RWPE1 (cell line): ENCODE measurements at regions of chr20 and their contacts with region 1.

Region 1: DNA sequence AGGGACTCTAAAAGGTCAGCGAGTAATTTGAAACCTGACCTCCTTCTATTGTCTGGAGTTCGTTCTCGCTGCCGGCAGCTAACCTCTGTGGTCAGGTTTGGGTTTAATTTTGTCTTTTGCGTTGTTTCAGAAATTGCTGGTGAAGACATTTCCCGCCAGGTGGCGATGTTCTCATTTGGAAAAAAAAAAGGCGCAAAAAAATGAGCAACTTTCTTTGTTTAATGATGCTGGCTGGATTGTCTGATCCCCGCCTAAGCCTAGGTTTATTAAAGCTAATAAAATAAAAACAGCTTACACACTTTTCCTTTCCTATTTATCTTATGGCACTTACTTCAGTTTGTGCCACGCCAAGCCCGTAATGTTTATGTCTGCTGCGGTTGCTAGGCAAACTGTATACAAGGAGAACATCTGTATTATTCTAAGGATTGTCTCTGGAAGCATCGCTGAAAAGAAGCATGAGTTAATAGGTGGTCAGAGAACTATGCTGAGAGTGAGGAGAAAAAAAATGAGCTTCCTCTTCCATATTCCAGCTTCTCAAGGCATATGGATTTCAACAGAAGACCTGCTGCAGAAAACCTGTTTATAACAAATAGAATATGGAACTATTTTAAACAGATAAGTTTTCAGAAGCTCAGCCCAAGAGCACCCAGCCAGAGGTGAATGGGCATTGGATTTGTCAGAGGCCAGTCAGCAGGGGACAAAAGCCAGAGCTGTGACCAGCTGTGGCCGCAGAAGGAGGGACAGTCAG is 205.7 kb downstream of the DOK5 start:
- DNase-seq: peak; percentile 35
- H3K27ac ChIP-seq: no peak overlapping the region
- CTCF ChIP-seq: peak; percentile 94

Region 2: GRCh38 chr20:54320115-54320607 is 360.9 kb before region 1 on chr20:
- CTCF ChIA-PET with region 1: interaction called, 10 read pairs
- POLR2A ChIA-PET with region 1: no interaction called
- DNase-seq: no peak
- H3K27ac ChIP-seq: no peak overlapping the region
- CTCF ChIP-seq: no peak

Region 3: DNA sequence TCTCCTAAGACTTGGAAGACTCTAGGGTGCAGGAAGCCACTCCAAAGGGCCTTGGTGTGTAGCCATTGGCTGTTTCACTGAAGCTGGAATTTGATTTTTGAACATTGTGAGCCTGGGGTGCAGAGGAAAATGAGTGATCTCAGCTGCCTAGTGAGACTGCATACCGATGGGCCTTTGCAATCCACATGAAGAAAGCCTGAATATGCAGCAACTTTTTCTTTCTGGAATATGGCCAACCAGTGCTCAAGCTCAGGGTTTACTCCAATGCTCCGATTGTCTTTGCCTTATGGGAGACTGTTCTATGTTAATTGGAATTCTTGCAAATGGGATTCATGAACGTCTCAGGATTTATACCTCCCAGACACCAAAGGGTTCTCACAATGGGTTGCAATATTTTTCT is 36.9 kb after region 1 on chr20:
- CTCF ChIA-PET with region 1: no interaction called
- POLR2A ChIA-PET with region 1: no interaction called
- DNase-seq: no peak
- H3K27ac ChIP-seq: no peak overlapping the region
- CTCF ChIP-seq: no peak

Region 4: DNA sequence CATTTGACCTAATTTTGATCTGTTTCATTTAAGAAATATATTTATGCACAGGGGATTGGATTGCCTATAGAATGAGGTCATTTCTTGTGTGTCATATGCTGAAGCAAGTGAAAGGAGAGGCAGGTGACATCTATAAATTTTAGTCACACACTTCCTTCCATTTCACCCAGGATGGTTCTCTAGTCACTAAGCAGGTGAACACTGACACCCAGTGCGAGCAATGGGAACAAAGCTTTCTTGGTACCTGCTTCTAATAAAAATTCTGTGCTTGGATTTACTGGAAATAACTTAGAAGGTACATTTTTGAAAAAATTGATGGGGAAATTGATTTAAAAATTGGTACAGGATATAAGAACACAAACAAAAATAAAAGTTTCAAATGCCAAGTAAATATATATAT is 1500.5 kb after region 1 on chr20:
- CTCF ChIA-PET with region 1: interaction called, 17 read pairs
- POLR2A ChIA-PET with region 1: no interaction called
- DNase-seq: no peak
- H3K27ac ChIP-seq: no peak overlapping the region
- CTCF ChIP-seq: peak; percentile 33

Region 5: GRCh38 chr20:56187534-56188198 is 1506.6 kb after region 1 on chr20:
- CTCF ChIA-PET with region 1: interaction called, 10 read pairs
- POLR2A ChIA-PET with region 1: no interaction called
- DNase-seq: peak; percentile 36
- H3K27ac ChIP-seq: no peak overlapping the region
- CTCF ChIP-seq: peak; percentile 81